ENCODE measurements at regions of chr22 and their contacts with region 1.

Region 1: DNA sequence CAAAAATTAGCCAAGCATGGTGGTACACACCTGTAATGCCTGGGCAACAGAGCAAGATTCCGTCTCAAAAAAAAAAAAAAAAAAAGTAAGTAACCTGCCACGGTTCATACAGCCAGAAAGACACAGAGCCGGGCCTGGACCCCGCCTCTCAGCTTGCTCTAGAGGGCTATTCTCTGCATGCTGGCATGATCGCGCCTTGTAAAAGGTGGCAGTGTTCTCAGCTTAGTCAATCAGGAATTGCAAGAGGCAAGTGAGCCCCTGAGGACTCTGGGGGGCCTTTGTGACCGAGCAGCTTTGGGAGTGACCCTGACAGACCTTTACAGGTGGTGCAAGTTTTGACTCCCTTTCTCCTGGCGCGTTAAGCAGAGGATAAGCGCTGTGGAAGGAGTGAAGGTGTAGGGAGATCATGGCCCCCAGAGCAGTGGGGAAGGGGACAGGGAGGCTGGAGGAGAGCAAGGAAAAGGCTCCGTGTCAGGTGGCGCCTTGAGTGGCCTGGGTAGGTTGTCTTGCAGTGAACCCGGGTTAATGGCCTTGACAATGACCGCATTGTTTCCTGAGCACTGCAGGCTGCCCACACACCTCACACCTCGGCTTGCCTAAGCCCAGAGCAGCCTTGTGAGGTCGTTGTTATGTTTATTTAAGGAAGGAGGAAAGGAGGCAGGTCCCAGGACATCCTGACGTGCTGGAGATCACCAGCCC is 48.9 kb downstream of the CDPF1 start:
- DNase-seq: no peak

Region 2: GRCh38 chr22:46250783-46251125 is 49.5 kb after region 1 on chr22:
- intact Hi-C with region 1: loop called in 1 of 2 experiments (anchors 1 kb)
- DNase-seq: no peak

Measured in posterior vena cava (tissue), 2 donors.